ENCODE measurements at regions of chr6 and their contacts with region 1.

Region 1: GRCh38 chr6:100664274-100665040 is 199.7 kb upstream of the SIM1 start:
- DNase-seq: peak in 1 of 2 experiments; percentile 70
- H3K4me3 ChIP-seq: no peak overlapping the region
- H3K4me1 ChIP-seq: peaks cover 5% of the 10 kb centered on the region; the same call in 1 of the 2 replicates
- H3K27me3 ChIP-seq: no peaks in the 10 kb centered on the region

Region 2: GRCh38 chr6:99868074-99868702 is 796.3 kb before region 1 on chr6:
- in situ Hi-C with region 1: loop called (anchors 25 kb)
- DNase-seq: peak; percentile 69 to 90
- H3K4me3 ChIP-seq: no peak overlapping the region
- H3K4me1 ChIP-seq: no peaks in the 10 kb centered on the region
- H3K27me3 ChIP-seq: peaks cover 9% of the 10 kb centered on the region

Region 3: DNA sequence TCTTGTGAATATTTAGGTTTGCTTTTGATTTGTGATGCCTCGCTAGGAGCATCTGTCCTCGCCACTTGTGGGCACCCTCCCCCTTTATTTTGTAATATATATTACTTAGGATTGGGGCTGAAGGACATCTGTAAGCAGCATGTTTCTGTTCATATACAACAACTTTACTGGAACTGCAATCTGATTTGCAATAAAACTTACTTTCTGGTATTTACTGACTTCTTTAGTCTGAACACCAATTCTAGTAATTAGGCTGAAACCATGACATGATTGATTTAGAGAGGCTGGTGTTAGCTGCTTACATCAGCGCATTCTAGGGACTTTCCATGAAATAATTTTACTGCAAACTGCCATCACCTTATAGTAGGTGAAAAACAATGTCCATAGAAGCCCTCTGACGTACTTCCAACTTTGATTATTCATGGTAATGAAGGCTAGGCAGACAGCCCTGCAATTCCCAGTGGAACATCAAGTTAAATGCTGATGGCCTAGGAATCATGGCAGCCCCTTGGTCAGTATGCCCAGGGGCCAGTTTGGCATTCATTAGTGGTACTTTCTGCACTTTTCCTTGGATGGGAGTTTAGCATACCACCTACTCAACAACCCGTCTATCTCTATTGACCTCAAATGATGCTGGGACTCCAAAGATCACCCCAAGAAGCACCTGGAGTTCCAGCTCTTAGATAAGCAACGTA is 537.5 kb before region 1 on chr6:
- in situ Hi-C with region 1: loop called (anchors 10 kb)
- DNase-seq: no peak
- H3K4me3 ChIP-seq: no peak overlapping the region
- H3K4me1 ChIP-seq: no peaks in the 10 kb centered on the region
- H3K27me3 ChIP-seq: no peaks in the 10 kb centered on the region

Region 4: GRCh38 chr6:100479179-100480035 is 185.1 kb before region 1 on chr6:
- in situ Hi-C with region 1: loop called (anchors 25 kb)
- DNase-seq: peak; percentile 39 to 42
- H3K4me3 ChIP-seq: no peak overlapping the region
- H3K4me1 ChIP-seq: no peaks in the 10 kb centered on the region
- H3K27me3 ChIP-seq: no peaks in the 10 kb centered on the region